Transverse colon (tissue), 4 donors: ENCODE measurements at regions of chr2 and their contacts with region 1.

Region 1: DNA sequence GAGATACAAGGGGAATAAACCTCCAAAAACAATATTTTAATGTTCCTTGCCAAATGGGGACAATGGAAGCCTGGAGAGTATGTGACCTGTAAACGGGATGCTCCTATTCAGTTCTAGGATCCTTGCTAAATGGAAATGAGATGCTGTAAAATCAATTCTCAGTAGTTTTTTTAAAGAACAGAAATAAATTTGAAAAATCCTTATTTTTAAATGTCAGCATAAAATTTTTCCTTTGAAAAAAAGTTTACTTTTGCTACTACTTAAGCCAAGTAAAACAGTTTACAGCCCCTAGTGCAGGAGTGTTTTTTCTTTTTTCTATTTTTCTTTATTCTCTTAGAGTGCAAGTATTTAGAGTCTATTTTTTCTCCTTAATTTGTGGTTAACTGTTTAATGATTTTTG is 158.8 kb downstream of the MBD5 start:
- DNase-seq: no peak
- H3K4me3 ChIP-seq: no peak overlapping the region
- H3K27ac ChIP-seq: no peak overlapping the region
- H3K4me1 ChIP-seq: no peaks in the 10 kb centered on the region
- H3K27me3 ChIP-seq: no peaks in the 10 kb centered on the region
- CTCF ChIP-seq: no peak
- EP300 ChIP-seq: no peak
- POLR2A ChIP-seq: no peak

Region 2: DNA sequence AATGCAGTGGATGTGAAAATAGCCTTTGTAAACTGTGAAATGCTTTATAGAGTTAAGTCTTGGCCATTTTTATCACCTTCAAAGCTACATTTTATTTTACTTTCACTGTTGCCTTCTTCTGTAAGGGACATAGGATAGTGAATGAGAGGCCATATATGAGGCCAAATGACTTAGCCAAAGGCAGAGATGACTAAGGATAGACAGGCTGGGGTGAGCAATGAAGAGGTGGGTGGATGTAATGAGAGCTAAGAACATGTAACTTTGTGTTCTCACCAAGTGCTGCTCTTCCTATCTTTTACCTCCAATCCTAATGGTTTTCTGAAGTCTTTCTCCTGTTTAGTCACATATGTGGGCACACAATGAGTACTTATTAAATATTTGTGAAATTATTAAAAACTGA is 56.9 kb before region 1 on chr2:
- in situ Hi-C with region 1: no loop called
- intact Hi-C with region 1: loop called (anchors 2 kb)
- DNase-seq: no peak
- H3K4me3 ChIP-seq: no peak overlapping the region
- H3K27ac ChIP-seq: no peak overlapping the region
- H3K4me1 ChIP-seq: no peaks in the 10 kb centered on the region
- H3K27me3 ChIP-seq: no peaks in the 10 kb centered on the region
- CTCF ChIP-seq: no peak
- EP300 ChIP-seq: no peak
- POLR2A ChIP-seq: no peak

Region 3: DNA sequence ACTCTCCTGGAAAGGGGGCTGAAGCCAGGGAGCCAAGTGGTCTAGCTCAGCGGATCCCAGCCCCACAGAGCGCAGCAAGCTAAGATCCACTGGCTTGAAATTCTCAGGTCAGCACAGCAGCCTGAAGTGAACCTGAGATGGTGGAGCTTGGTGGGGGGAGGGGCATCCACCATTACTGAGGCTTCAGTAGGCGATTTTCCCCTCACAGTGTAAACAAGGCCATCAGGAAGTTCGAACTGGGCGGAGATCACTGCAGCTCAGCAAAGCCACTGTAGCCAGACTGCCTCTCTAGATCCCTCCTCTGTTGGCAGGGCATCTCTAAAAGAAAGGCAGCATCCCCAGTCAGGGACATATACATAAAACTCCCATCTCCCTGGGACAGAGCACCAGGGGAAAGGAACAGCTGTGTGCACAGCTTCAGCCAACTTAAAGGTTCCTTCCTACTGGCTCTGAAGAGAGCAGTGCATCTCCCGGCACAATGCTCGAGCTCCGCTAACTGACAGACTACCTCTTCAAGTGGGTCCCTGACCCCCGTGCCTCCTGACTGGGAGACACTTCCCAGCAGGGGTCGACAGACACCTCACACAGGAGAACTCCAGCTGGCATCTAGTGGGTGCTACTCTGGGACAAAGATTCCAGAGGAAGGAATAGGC is 182.5 kb after region 1 on chr2:
- in situ Hi-C with region 1: no loop called
- intact Hi-C with region 1: no loop called
- DNase-seq: no peak
- H3K4me3 ChIP-seq: no peak overlapping the region
- H3K27ac ChIP-seq: no peak overlapping the region
- H3K4me1 ChIP-seq: no peaks in the 10 kb centered on the region
- H3K27me3 ChIP-seq: no peaks in the 10 kb centered on the region
- CTCF ChIP-seq: no peak
- EP300 ChIP-seq: no peak
- POLR2A ChIP-seq: no peak